ENCODE measurements at regions of chr2 and their contacts with region 1.

Region 1: DNA sequence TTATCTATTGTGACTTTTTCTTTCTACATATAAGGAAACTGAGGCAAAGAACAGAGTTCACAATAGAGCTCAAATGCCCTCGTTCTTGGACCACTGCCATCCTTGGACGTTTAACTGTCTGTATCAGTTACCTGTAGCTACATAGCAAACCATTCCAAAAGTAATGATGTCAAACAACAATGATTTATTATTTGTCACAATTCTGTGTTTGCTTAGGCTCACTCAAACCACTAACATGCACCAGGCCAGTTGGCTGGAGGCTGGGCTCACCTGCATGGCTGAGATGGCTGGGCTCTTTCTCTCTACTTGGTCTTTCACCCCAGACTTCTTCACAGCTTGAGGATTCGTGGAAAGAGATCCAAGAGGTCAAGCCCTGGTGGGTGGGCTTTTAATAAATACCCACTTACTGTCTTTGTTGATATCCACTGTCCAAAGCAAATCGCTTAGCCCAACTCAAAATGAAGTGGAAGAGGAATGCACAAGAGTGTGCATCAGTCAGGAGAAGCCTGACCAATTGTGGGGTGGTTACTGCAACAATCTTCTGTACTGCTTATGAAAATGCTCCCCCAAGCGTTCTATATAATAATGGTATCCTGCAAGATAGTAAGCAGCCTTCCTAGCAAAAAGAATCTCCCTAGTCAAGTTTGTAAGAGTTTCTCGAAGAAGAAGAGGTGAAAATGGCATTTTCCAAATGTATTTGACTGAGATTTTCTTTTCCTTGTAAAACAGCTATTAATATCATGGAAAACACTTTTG is 163.5 kb upstream of the NT5C1B start:
- DNase-seq: no peak
- ATAC-seq: no peak
- H3K4me3 ChIP-seq: no peak overlapping the region
- H3K4me3 Mint-ChIP-seq: no peak overlapping the region
- H3K27ac ChIP-seq: no peak overlapping the region
- H3K27ac Mint-ChIP-seq: no peak overlapping the region
- H3K4me1 ChIP-seq: no peaks in the 10 kb centered on the region
- H3K4me1 Mint-ChIP-seq: no peaks in the 10 kb centered on the region
- H3K27me3 ChIP-seq: no peaks in the 10 kb centered on the region
- H3K27me3 Mint-ChIP-seq: no peaks in the 10 kb centered on the region

Region 2: GRCh38 chr2:18404708-18405107 is 348.1 kb before region 1 on chr2:
- CTCF ChIA-PET with region 1: interaction called in 1 of 2 experiments, 10 read pairs
- POLR2A ChIA-PET with region 1: no interaction called
- DNase-seq: no peak
- ATAC-seq: no peak
- H3K4me3 ChIP-seq: no peak overlapping the region
- H3K4me3 Mint-ChIP-seq: no peak overlapping the region
- H3K27ac ChIP-seq: no peak overlapping the region
- H3K27ac Mint-ChIP-seq: no peak overlapping the region
- H3K4me1 ChIP-seq: no peaks in the 10 kb centered on the region
- H3K4me1 Mint-ChIP-seq: no peaks in the 10 kb centered on the region
- H3K27me3 ChIP-seq: peaks cover 0 to 2% of the 10 kb centered on the region in 2 experiments
- H3K27me3 Mint-ChIP-seq: peaks cover 6 to 9% of the 10 kb centered on the region in 2 donors